ENCODE measurements at regions of chr10 and their contacts with region 1.

Region 1: DNA sequence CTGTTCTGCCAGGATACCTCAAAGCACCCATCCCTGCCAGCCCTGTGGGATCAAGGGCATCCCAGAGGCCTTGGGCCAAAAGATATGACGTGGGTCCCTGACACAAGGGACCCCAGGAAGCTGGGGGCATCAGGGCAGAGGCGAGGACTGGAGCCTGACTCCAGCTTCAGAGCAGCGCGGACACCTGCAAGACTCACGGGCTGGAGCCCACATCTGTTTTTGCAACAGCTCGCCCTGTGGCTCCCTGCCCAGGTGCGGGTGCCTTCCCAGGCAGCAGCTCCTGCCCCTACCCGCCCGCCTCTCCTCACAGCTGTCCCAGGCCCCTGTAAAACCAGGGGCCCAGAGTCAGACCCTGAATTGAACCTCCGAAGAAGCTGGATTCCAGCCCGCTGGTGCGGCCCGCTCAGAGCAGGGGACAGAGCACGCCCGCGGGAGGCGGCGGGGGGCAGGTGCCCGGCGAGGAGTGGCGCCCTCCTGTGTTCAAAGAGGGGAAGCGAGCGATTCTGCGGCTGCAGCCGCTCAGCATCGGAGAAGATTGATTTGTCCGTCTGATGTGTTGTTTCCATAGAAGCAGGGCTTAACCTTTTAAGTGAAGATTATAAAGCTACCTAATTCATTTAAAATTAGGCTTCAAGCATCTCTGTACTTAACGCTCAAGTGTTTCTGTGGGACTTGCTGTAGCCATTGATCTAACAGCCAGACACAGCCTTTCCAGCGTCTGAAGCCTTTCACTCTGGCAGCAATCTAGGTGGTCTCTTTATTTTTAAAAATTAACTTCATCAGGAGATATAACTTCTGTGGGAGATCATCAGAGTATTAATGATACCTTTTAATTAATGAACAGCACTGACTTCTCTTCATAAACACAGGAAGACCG is 88.4 kb downstream of the BEND7 start:
- DNase-seq: peak; percentile 79
- ATAC-seq: peak; percentile 83
- H3K4me3 Mint-ChIP-seq: peak overlapping the region; percentile 70
- H3K27ac Mint-ChIP-seq: no peak overlapping the region
- H3K4me1 Mint-ChIP-seq: peaks cover 41% of the 10 kb centered on the region
- H3K27me3 Mint-ChIP-seq: peaks cover 32% of the 10 kb centered on the region
- CTCF ChIP-seq: peak; percentile 86

Region 2: DNA sequence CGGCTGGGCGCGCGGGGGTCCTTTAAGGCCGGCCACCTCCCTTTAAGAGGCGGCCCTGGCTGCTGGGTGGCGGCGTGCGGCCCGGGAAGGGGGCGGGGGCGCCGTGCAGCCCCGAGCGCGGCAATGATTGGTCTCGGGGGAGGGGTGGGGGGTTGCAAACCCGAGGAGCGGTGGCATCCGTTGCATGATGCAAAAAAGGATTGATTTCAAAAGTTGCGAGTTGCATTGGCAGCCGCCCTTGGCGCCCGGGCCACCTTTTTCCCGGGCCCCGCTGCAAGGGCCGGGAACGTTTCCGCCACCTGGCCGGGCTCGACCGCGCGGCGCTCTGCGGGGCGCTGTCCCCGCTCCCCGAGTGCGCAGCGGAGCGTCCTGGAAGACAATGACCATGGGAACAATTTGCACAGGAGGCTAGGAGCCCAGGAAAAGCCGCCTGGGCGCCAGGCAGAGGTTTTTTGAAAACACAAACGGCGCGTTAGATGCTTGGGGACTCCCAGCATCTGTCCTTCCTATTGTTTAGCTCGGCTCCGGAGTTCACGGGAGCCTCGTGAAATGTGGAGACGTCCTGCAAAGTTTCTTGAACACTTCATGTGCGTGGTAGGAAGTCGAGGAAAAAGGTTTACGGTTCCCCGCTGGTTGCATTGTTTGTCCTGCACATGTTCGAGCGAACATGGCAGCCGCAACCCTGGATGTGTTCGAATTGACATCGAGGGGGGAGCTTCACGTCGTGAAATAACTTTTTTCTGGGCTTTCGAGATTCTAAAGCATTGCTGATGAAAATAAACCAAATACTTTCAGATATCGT is 92.0 kb before region 1 on chr10 and contains the start of gene SEPHS1:
- CTCF ChIA-PET with region 1: interaction called, 13 read pairs
- POLR2A ChIA-PET with region 1: interaction called, 5 read pairs
- DNase-seq: peak; percentile 81
- ATAC-seq: peak; percentile 25
- H3K4me3 Mint-ChIP-seq: peak within 1 kb of the TSS; percentile 94
- H3K27ac Mint-ChIP-seq: peak within 1 kb of the TSS; percentile 100
- H3K4me1 Mint-ChIP-seq: peaks cover 71% of the 10 kb centered on the region
- H3K27me3 Mint-ChIP-seq: no peaks in the 10 kb centered on the region; the same call in 1 of the 2 replicates
- CTCF ChIP-seq: no peak
- total RNA-seq, gene SEPHS1: 501 to 509 TPM (median 501 TPM) in 3 replicates

Region 3: DNA sequence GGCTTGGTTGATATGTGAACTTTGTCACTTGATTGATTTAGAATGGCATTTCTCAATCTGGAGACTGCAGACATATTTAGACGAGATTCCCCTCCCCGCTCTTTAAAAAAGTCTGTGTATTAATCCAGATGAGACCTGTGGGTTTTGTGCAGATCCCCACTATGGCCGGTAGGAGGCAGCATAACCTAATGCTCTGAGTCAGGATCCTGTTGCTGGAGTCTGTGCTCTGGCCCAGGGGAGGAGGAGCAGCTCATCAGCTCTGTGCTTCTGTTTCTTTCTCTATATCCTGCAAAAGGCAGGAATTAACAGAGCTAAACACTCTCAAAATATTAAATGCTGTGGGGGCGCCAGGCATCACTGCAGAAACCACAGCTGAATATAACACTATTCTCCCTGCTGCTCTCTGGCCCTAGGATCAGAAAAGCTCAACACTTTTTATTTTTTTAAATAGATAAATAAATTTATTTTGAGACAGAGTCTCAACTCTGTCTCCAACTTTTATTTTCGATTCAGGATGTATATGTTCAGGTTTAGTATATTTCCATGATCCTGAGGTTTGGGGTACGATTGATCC is 68.4 kb before region 1 on chr10:
- CTCF ChIA-PET with region 1: interaction called, 107 read pairs
- POLR2A ChIA-PET with region 1: no interaction called
- DNase-seq: peak; percentile 65
- ATAC-seq: peak; percentile 100
- H3K4me3 Mint-ChIP-seq: no peak overlapping the region
- H3K27ac Mint-ChIP-seq: no peak overlapping the region
- H3K4me1 Mint-ChIP-seq: peaks cover 10% of the 10 kb centered on the region; the same call in 1 of the 2 replicates
- H3K27me3 Mint-ChIP-seq: no peaks in the 10 kb centered on the region
- CTCF ChIP-seq: no peak; the same call in 1 of the 2 replicates

Region 4: GRCh38 chr10:13382703-13383398 is 57.6 kb before region 1 on chr10:
- CTCF ChIA-PET with region 1: interaction called, 21 read pairs
- POLR2A ChIA-PET with region 1: no interaction called
- DNase-seq: no peak
- ATAC-seq: peak; percentile 45
- H3K4me3 Mint-ChIP-seq: peak overlapping the region; percentile 69
- H3K27ac Mint-ChIP-seq: 0 out of 2 replicates have a peak overlapping the region, but pooled peaks have one; percentile 5
- H3K4me1 Mint-ChIP-seq: peaks cover 16% of the 10 kb centered on the region
- H3K27me3 Mint-ChIP-seq: peaks cover 24% of the 10 kb centered on the region
- CTCF ChIP-seq: no peak

Region 5: DNA sequence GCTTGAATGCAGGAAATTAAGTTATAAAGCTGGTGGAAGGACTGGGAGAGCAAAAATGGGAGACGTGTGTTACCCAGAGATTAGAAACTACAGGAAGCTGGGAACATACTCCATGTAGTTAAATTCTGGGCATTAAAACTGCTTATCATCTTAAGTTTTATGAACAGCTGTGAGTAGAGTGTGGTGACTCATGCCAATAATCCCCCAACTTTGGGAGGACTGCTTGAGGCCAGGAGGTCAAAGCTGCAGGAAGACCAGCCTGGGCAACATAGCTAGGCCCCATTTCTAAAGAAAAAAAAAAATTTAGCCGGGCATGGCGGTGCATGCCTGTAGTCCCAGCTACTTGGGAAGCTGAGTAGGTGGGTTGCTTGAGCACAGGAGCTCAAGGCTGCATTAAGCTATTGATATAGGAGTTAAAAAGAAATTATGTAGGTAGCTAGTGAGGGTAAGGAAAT is 36.1 kb before region 1 on chr10:
- CTCF ChIA-PET with region 1: interaction called, 33 read pairs
- POLR2A ChIA-PET with region 1: no interaction called
- DNase-seq: no peak
- ATAC-seq: no peak
- H3K4me3 Mint-ChIP-seq: no peak overlapping the region
- H3K27ac Mint-ChIP-seq: peak overlapping the region; percentile 90
- H3K4me1 Mint-ChIP-seq: peaks cover 35% of the 10 kb centered on the region
- H3K27me3 Mint-ChIP-seq: peaks cover 14% of the 10 kb centered on the region
- CTCF ChIP-seq: no peak

Region 6: GRCh38 chr10:13414894-13415293 is 25.5 kb before region 1 on chr10:
- CTCF ChIA-PET with region 1: interaction called, 54 read pairs
- POLR2A ChIA-PET with region 1: no interaction called
- DNase-seq: peak; percentile 62
- ATAC-seq: peak; percentile 92
- H3K4me3 Mint-ChIP-seq: no peak overlapping the region
- H3K27ac Mint-ChIP-seq: no peak overlapping the region
- H3K4me1 Mint-ChIP-seq: no peaks in the 10 kb centered on the region
- H3K27me3 Mint-ChIP-seq: peaks cover 7% of the 10 kb centered on the region
- CTCF ChIP-seq: no peak

Region 7: DNA sequence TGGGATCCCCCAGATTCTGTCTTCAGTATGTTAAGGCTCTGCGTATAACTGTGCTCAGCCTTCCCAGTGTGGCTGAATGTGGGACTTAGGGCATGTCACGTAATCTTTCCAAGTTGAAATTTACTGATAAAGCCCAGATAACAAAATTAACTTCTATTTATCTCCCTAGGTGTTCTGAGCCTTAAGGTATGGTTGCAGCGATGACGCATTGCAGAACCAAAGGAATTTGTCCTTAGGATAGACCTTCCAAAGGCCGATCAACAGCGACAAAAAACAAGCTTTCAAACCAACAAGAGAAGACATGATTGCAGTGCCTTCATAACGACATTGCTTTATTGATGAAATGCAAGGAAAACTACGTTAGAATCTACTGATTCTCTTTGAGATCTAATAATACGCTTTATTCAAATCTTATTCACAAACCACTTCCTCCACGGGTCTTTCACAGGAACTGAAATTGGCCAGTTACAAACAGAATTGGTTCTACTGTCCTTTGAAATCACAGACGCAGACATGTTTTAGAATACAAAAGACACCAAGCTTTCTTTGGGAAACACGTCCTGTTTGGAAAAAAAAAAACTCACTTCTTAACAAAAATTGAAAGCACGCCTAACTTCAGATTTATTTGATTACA is 17.7 kb before region 1 on chr10:
- CTCF ChIA-PET with region 1: interaction called, 54 read pairs
- POLR2A ChIA-PET with region 1: no interaction called
- DNase-seq: no peak
- ATAC-seq: no peak
- H3K4me3 Mint-ChIP-seq: no peak overlapping the region
- H3K27ac Mint-ChIP-seq: no peak overlapping the region
- H3K4me1 Mint-ChIP-seq: no peaks in the 10 kb centered on the region
- H3K27me3 Mint-ChIP-seq: no peaks in the 10 kb centered on the region
- CTCF ChIP-seq: no peak

Measured in WTC11 (cell line).